ENCODE measurements at regions of chr15 and their contacts with region 1.

Region 1: DNA sequence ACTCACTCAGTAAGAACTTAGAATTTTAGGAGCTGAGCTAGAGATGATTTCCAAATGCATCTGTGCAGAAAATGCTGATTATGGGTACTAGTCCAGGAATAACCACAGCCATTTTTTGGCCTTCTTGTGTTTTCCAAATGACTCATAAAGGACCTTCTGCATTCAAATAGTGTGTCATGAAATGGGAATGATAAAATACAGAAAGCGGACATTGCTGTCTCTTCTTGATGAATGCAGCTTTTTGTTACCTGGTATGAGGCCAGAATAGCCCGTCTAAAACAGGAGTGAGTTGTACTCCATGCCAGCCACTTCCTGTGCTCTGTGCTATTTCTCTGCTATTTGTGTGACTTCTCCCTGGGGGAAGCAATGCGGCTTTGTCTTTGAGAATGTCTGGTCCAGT is 20.5 kb upstream of the FRMD5 start:
- DNase-seq: peak; percentile 90
- H3K4me3 ChIP-seq: no peak overlapping the region
- CTCF ChIP-seq: no peak

Region 2: DNA sequence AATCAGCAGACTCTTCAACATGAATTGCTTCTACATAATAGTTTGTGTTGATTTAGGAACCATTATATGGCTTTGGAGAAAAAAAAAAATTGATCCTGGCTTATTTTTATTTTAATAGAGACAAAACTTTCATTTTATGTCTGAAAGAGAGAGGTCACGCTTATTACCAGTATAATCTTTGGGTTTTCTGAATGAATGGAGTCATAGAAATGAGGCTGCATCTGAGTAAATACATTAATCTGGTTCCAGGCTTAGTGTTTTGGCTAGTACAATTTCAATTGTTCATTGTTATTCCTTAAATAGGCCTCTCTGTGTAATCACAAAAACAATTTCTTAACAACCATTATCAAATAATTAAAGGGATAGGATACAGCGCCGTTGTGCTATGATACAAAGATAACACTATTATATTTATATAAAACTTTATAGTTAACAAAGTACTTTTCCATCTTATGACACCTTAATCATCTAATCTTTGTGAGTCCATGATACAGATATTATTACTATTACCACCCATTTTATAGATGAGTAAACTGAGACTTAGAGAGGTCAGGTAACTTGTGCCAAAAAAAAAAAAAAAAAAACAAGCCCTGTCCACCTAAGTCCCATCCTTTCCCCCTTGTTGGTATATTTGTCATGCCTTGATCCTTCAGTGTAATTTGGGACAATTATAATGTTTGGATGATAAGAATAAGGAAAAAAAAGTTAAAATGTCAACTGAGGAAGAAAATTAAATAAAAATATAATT is 31.1 kb after region 1 on chr15:
- in situ Hi-C with region 1: no loop called
- DNase-seq: no peak
- H3K4me3 ChIP-seq: no peak overlapping the region
- CTCF ChIP-seq: no peak

Region 3: GRCh38 chr15:44286814-44287452 is 71.3 kb after region 1 on chr15:
- in situ Hi-C with region 1: loop called (anchors 5 kb)
- DNase-seq: no peak
- H3K4me3 ChIP-seq: peak overlapping the region; percentile 58
- CTCF ChIP-seq: no peak

Region 4: DNA sequence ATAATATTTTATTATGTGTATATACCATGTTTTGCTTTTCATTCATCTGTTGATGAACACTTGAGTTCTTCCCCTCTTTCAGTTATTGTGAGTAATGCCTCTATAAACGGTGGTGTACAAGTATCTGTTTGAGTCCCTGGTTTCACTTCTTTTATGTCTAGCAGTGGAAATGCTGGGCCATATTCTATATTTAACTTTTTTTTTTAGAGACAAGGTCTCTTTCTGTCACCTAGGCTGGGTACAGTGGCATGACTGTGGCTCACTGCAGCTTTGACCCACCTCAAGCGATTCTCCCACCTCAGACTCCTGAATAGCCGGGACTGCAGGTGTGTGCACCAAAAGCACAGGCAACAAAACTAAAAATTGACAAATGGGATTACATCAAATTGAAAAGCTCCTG is 92.8 kb after region 1 on chr15:
- in situ Hi-C with region 1: no loop called
- DNase-seq: no peak
- H3K4me3 ChIP-seq: no peak overlapping the region
- CTCF ChIP-seq: no peak